ENCODE measurements at regions of chr2 and their contacts with region 1.

Region 1: GRCh38 chr2:226800941-226801784 is 1.5 kb upstream of the IRS1 start:
- DNase-seq: peak; percentile 92
- CTCF ChIP-seq: no peak

Region 2: GRCh38 chr2:225660262-225661131 is 1140.7 kb before region 1 on chr2:
- in situ Hi-C with region 1: loop called (anchors 25 kb)
- DNase-seq: peak; percentile 51
- CTCF ChIP-seq: peak; percentile 88

Region 3: DNA sequence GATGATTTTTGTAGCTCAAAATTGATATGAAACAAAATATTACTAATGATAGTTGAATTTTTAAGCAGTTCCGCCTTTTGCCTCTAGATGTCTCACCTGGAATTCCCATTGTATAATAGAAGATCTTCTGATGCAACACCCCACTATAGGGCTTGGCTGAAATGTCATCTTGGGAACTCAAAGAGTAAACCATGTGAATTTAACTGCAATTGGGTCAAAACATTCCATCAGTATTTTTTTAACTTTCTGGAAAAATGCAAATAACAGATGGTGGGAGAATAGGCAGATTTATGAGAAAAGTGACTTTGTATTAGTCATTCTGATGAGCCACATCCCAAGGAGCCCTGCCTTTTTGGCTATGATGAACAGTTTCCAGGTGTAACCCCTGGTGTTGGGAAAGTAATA is 911.7 kb before region 1 on chr2:
- in situ Hi-C with region 1: loop called (anchors 25 kb)
- DNase-seq: peak; percentile 20
- CTCF ChIP-seq: peak; percentile 59

Region 4: GRCh38 chr2:226215902-226216503 is 585.2 kb before region 1 on chr2:
- in situ Hi-C with region 1: loop called (anchors 25 kb)
- DNase-seq: peak; percentile 19
- CTCF ChIP-seq: peak; percentile 75

Region 5: GRCh38 chr2:226701052-226701451 is 100.1 kb before region 1 on chr2:
- in situ Hi-C with region 1: no loop called
- DNase-seq: no peak
- CTCF ChIP-seq: no peak

Region 6: GRCh38 chr2:226891780-226892590 is 90.8 kb after region 1 on chr2:
- in situ Hi-C with region 1: no loop called
- DNase-seq: no peak
- CTCF ChIP-seq: no peak

Region 7: GRCh38 chr2:227106845-227107759 is 305.9 kb after region 1 on chr2:
- in situ Hi-C with region 1: loop called (anchors 25 kb)
- DNase-seq: peak; percentile 29
- CTCF ChIP-seq: peak; percentile 69